AG04450 (cell line): ENCODE measurements at regions of chr1 and their contacts with region 1.

Region 1: GRCh38 chr1:58950897-58951296 is 167.1 kb upstream of the JUN start:
- DNase-seq: no peak
- H3K4me3 ChIP-seq: no peak overlapping the region
- H3K27ac ChIP-seq: no peak overlapping the region
- H3K27me3 ChIP-seq: no peaks in the 10 kb centered on the region
- CTCF ChIP-seq: no peak

Region 2: GRCh38 chr1:58883037-58883887 is 67.6 kb before region 1 on chr1:
- CTCF ChIA-PET with region 1: no interaction called
- POLR2A ChIA-PET with region 1: no interaction called
- DNase-seq: peak; percentile 79
- H3K4me3 ChIP-seq: no peak overlapping the region
- H3K27ac ChIP-seq: peak overlapping the region; percentile 88
- H3K27me3 ChIP-seq: no peaks in the 10 kb centered on the region
- CTCF ChIP-seq: no peak

Region 3: GRCh38 chr1:59083946-59084865 is 133.3 kb after region 1 on chr1:
- CTCF ChIA-PET with region 1: interaction called, 11 read pairs
- POLR2A ChIA-PET with region 1: no interaction called
- DNase-seq: no peak
- H3K4me3 ChIP-seq: no peak overlapping the region
- H3K27ac ChIP-seq: peak overlapping the region; percentile 55
- H3K27me3 ChIP-seq: no peaks in the 10 kb centered on the region
- CTCF ChIP-seq: no peak